GM18951 (cell line): ENCODE measurements at regions of chr6 and their contacts with region 1.

Region 1: GRCh38 chr6:29953001-29953441 is 10.7 kb downstream of the HLA-A start:
- POLR2A ChIP-seq: no peak

Region 2: GRCh38 chr6:29665942-29666825 is 286.8 kb before region 1 on chr6:
- in situ Hi-C with region 1: no loop called
- POLR2A ChIP-seq: no peak

Region 3: GRCh38 chr6:29797135-29797534 is 155.9 kb before region 1 on chr6:
- in situ Hi-C with region 1: loop called (anchors 5 kb)
- POLR2A ChIP-seq: no peak

Region 4: DNA sequence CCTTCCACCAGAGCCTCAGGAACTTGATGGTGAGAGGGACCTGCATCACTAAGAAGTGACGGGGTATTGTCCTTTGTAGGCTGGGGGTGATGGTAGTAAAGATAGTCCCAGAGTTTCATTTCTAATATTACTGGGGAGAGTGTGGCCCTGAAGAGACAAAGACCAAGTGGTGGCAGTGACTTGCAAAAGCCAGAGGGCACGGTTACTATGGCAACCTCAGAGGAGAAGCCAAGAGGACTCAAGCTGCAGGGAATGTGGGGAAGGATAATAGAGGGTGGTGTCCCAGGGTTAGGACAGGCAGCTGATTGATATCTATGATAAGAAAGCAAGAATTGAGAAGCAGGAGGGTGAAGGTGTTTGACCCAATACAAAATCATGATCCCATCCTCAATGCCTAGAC is 82.9 kb before region 1 on chr6:
- in situ Hi-C with region 1: loop called (anchors 5 kb)
- POLR2A ChIP-seq: no peak

Region 5: DNA sequence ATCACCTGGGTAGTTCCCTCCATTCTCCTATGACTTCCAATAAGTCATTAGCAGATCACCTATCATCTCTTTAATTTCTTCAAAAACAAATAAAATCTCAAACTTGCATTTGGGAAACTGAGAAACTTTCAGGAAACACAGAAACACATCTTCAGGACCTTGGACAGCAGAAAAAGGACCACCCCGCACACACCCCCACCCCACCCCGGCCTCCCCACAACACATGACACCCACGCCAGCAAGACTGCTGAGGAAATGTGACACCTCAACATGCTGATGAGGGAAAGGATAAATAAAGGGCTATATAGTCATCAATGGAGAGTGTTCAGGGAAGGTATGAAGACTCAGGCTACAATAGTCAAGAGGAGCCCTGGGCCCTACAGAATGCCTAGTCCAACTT is 358.1 kb after region 1 on chr6:
- in situ Hi-C with region 1: no loop called
- POLR2A ChIP-seq: no peak